Right ventricle myocardium inferior (tissue), 1 donor: ENCODE measurements at regions of chr4 and their contacts with region 1.

Region 1: GRCh38 chr4:17576932-17577665 is at the start of gene LAP3:
- DNase-seq: peak; percentile 99
- ATAC-seq: peak; percentile 99
- total RNA-seq, gene LAP3: 56.9 TPM

Region 2: GRCh38 chr4:17218786-17219185 is 358.3 kb before region 1 on chr4:
- intact Hi-C with region 1: no loop called
- DNase-seq: no peak
- ATAC-seq: no peak

Region 3: GRCh38 chr4:17614416-17615299 is 37.6 kb after region 1 on chr4 and contains the start of gene MED28:
- intact Hi-C with region 1: loop called (anchors 1 kb)
- DNase-seq: peak; percentile 98
- ATAC-seq: peak; percentile 96
- total RNA-seq, gene MED28: 22.0 TPM

Region 4: GRCh38 chr4:17636696-17637622 is 59.9 kb after region 1 on chr4:
- intact Hi-C with region 1: no loop called
- DNase-seq: peak; percentile 85
- ATAC-seq: peak; percentile 77

Region 5: DNA sequence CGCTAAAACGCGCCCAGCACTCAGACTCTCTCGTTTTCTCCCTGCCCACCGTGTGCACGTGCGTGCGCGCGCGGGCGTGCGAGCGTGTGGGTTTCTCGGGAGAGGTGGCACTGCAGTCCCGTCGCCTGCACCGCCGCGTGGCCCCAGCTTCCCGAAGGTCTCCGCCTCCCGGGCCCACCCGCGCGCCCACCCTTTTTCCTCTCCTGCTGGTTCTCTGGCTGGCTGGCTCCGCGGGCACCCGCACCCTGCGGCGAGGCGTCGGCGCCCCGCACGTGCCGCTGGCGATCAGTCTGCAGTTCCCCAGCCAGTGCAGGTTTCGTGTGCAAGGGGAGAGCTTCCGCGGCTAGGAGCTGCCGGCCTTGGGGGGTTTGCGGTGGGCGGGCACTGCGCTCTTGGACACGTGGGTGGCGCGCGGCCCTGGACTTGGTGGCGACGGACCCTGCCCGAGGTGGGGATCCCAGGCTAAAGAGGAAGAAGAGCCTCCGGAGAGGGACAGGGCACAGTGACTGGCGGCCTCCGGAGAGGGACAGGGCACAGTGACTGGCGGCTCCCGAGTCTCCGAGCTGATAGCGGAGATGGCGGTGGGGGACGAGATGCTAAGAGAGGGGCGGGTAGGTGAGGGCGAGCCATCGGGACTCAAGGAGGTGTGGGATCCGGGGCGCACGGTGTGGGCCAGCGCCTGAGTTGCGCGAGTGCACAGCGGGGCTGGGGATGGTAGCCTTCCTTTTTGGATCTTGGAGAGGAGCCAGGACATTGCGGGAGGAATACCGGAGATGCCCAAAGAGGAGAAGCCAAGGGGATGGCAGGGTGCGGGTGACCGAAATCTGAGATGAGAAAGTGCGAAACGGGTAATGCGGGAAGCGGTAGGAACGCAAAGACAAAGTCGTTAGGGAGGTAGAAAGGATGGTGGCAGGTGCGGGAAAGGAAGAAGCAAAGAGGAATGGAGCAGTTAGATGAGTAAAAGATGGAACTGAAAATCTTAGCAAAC is 204.5 kb after region 1 on chr4 and contains the start of gene FAM184B:
- intact Hi-C with region 1: no loop called
- DNase-seq: no peak
- ATAC-seq: no peak
- total RNA-seq, gene FAM184B: not detected